ENCODE measurements at regions of chr17 and their contacts with region 1.

Region 1: DNA sequence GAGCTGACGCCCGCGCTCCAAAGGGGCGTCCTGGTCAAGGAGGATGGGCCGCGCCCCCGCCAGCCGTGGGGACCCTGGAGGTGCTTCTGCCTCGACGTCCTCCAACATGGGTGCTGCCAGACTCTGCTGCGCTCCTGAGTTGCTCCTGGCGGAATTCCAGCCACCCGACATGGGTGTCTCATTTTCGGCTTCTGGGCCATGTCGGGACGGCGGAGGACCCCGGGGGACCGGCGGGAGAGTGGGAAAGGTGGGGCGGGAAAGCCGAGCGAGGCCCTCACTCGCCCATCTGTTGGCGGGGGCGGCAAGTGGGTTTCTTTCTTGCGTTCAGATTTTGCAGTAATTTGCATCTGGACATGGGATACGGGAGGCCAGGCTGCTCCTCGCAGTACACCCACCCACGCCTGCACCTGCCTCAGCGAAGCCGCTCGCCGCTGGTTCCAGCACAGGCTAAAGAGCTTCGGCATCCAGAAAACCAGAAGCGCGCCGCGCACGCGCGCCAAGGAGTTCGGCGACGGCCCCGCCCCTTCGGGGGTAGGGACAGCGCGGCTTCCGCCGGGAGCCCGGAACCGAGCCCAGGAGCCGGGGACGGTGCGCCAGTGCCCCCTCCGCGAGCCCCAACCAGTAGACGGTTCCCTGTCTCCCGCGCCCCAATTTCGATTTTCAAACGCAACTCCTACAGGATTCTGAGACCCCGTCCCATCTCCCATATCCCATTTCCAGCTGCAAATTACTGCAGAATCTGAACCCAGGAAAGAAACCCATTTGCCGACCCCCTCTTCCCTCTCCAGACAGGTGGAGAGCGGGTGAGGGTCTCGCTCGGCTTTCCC is at the start of gene ARMC7:
- H3K4me3 ChIP-seq: peak within 1 kb of the TSS; percentile 75
- H3K27ac ChIP-seq: peak within 1 kb of the TSS; percentile 67; the same call in 1 of the 2 replicates
- H3K4me1 ChIP-seq: peaks cover 17% of the 10 kb centered on the region
- CTCF ChIP-seq: peak; percentile 10; the same call in 1 of the 2 replicates

Region 2: GRCh38 chr17:74916136-74916850 is 193.3 kb before region 1 on chr17:
- CTCF ChIA-PET with region 1: no interaction called
- POLR2A ChIA-PET with region 1: no interaction called
- H3K4me3 ChIP-seq: no peak overlapping the region
- H3K27ac ChIP-seq: no peak overlapping the region
- H3K4me1 ChIP-seq: no peaks in the 10 kb centered on the region
- CTCF ChIP-seq: no peak

Region 3: DNA sequence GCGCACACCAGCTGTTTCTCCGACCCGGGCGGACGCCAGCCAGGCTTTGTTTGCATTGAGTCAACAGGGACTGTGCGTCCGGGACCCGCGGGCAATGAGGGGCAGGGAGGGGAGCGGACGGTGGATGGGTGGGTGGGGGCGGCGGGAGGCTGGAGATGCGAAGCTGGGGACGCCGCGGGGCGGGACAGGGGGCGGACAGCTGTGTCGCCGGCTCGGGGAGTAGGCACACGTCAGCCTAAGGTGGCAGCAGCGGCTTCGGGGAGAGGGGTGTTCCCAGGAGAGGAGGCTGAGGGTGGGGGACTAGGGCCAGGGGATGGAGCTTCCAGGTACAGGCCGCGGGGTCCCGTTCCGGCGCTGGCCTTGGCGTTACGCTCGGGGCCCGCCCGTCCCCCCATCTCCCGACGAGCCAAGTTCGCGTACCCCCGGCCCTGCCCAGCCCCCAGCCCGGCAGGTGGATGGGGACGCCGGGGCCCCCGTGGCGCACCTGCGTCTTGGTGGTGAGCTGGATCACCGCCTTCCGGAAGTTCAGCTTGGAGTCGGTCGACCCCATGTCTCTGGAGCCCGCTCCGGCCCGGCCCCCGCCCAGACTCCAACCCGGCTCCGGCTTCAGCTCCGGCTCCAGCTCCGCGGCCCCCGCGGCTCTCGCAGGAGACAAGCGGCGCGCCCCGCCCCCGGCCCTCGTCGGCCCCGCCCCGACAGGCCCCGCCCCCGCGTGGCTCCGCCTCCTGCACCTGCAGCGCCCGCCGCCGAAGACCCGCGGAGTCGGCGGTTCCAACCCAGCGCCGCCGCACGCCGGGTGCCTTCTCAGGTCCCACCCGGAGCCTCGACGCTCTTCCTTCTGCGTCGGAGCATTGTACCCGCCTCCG is 137.3 kb before region 1 on chr17 and contains the start of gene HID1:
- CTCF ChIA-PET with region 1: interaction called, 5 read pairs
- POLR2A ChIA-PET with region 1: interaction called, 11 read pairs
- H3K4me3 ChIP-seq: peak within 1 kb of the TSS; percentile 74
- H3K27ac ChIP-seq: peak within 1 kb of the TSS; percentile 60; the same call in 1 of the 2 replicates
- H3K4me1 ChIP-seq: peaks cover 4% of the 10 kb centered on the region; the same call in 1 of the 2 replicates
- CTCF ChIP-seq: no peak; the same call in 1 of the 2 replicates

Region 4: DNA sequence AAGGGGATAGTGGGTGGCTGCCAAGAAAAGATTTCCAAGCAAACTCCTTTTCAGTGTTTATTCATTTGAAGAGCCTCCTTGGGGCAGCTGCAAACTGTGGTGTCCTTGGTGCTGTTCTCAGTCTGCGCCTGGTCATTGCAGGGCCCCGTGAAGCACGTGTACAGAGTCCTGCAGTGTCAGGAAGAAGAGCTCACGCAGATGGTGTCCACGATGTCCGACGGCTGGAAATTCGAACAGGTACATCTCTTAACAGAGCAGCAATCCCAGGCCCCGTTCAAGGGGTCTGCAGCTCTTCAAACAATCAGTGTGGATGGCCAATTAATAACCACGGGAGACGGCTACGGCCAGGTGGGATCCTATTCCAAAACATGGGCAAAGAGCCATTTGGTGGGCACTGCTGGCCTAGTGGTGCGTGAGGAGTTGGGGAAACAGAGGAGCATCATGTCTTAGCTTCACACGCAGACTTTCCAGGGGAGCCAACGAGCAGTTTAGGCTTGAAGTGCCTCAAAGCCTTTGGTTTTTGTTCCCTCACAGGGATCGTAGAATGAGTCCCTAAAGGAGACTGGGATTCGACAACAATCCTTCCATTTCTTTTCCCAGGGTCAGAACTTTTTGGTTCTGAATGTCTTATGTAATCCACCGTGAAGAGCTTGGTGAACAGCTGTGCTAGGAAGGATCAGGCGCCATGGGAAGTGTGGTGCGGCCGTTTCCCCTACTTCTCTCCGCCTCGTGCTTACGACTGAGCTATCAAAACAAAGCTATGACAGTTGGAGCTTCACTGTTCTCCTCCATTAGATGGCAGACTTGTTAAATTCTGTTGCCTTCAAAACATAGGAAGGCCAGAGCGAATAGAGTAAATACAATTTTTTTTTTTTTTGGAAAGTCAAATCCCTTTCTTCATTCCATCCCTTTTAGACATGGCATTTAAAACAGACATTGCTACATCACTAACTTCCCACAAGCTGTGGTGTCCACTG is 50.0 kb before region 1 on chr17:
- CTCF ChIA-PET with region 1: interaction called, 117 read pairs
- POLR2A ChIA-PET with region 1: interaction called, 6 read pairs
- H3K4me3 ChIP-seq: no peak overlapping the region
- H3K27ac ChIP-seq: 0 out of 2 replicates have a peak overlapping the region, but pooled peaks have one; percentile 44
- H3K4me1 ChIP-seq: no peaks in the 10 kb centered on the region
- CTCF ChIP-seq: no peak

Region 5: DNA sequence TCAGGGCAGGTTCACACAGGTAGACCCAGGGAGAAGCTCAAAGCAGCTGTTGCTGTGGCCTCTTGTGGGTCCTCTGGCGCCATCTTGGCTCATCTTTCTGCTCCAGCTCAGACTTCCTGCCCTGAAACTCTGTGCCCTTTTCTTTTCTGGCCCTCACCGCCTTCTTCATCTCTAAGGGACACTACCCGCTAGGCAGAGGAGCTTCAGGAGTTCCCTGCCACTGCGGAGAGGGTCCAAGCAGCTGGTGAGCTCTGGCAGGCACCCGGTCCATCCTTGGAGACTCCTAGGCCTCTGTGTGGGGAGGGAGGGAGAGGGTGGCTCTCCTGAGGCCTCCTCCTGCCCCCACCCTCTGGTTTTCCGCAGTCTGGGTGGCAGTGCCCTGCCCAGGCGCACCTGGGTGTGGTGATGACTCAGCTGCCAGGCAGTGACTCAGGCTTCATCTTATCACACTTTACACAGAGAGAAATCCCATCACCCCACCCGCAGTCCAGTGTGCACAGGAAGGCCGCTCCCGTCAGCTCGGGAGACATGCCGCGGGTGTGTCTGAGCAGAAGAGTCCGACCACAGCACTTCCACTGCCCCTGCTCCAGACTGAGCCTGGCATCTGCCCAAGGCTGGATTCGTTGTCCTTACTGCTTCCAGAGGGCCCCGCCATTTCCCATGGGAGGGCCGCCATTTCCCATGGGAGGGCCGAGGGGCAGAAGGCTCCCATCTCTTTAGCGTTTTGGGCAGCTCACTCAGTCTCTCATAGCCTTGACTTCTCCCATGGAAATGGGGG is 14.6 kb after region 1 on chr17:
- CTCF ChIA-PET with region 1: interaction called, 86 read pairs
- POLR2A ChIA-PET with region 1: interaction called, 21 read pairs
- H3K4me3 ChIP-seq: no peak overlapping the region
- H3K27ac ChIP-seq: peak overlapping the region; percentile 32; the same call in 1 of the 2 replicates
- H3K4me1 ChIP-seq: 0 out of 2 replicates have a peak, but pooled peaks cover 4% of the 10 kb centered on the region
- CTCF ChIP-seq: no peak

Region 6: GRCh38 chr17:75173526-75173925 is 63.9 kb after region 1 on chr17:
- CTCF ChIA-PET with region 1: interaction called, 103 read pairs
- POLR2A ChIA-PET with region 1: interaction called, 10 read pairs
- H3K4me3 ChIP-seq: no peak overlapping the region
- H3K27ac ChIP-seq: no peak overlapping the region; the same call in 1 of the 2 replicates
- H3K4me1 ChIP-seq: no peaks in the 10 kb centered on the region
- CTCF ChIP-seq: no peak

Region 7: GRCh38 chr17:75238684-75239191 is 129.1 kb after region 1 on chr17:
- CTCF ChIA-PET with region 1: interaction called, 30 read pairs
- POLR2A ChIA-PET with region 1: no interaction called
- H3K4me3 ChIP-seq: no peak overlapping the region
- H3K27ac ChIP-seq: no peak overlapping the region
- H3K4me1 ChIP-seq: no peaks in the 10 kb centered on the region
- CTCF ChIP-seq: peak; percentile 86